ENCODE measurements at regions of chr3 and their contacts with region 1.

Region 1: GRCh38 chr3:184864000-184864399 is 52.0 kb downstream of the VPS8 start:
- DNase-seq: no peak

Region 2: GRCh38 chr3:184850201-184850600 is 13.8 kb before region 1 on chr3:
- intact Hi-C with region 1: loop called (anchors 1 kb)
- DNase-seq: no peak

Region 3: GRCh38 chr3:184884359-184885017 is 20.5 kb after region 1 on chr3:
- intact Hi-C with region 1: no loop called
- DNase-seq: no peak

Measured in posterior cingulate gyrus (tissue), 11 donors.